ENCODE measurements at regions of chr15 and their contacts with region 1.

Region 1: DNA sequence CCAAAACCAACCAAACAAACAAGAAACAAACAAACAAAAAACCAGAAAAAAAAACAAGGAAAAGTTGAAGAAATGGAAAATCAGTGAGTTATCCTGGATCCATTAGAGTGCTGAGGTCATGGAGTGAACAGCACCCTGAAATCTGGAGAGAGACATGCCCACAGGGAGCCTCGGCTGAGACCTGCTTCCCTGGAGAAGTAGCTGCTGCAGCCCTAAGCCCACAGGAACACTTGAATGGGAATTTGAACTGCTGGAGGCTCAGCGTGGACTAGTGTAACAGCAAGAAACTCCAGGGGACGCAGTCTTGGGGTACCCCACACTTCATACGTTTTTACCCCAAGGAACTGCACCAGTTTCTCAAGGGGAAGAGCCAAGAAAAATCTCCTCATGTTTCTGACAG is 144.1 kb upstream of the UBE3A start:
- DNase-seq: no peak
- ATAC-seq: no peak
- H3K4me3 ChIP-seq: no peak overlapping the region
- H3K27ac ChIP-seq: no peak overlapping the region
- H3K4me1 ChIP-seq: no peaks in the 10 kb centered on the region
- H3K27me3 ChIP-seq: no peaks in the 10 kb centered on the region
- CTCF ChIP-seq: no peak
- POLR2A ChIP-seq: no peak
- RAD21 ChIP-seq: no peak

Region 2: GRCh38 chr15:25333049-25333448 is 249.8 kb before region 1 on chr15:
- CTCF ChIA-PET with region 1: no interaction called
- POLR2A ChIA-PET with region 1: no interaction called
- dilution Hi-C with region 1: no loop called
- in situ Hi-C with region 1: no loop called
- intact Hi-C with region 1: no loop called
- DNase-seq: no peak
- ATAC-seq: no peak
- H3K4me3 ChIP-seq: no peak overlapping the region
- H3K27ac ChIP-seq: no peak overlapping the region
- H3K4me1 ChIP-seq: no peaks in the 10 kb centered on the region
- H3K27me3 ChIP-seq: no peaks in the 10 kb centered on the region
- CTCF ChIP-seq: no peak
- POLR2A ChIP-seq: no peak
- RAD21 ChIP-seq: no peak

Region 3: DNA sequence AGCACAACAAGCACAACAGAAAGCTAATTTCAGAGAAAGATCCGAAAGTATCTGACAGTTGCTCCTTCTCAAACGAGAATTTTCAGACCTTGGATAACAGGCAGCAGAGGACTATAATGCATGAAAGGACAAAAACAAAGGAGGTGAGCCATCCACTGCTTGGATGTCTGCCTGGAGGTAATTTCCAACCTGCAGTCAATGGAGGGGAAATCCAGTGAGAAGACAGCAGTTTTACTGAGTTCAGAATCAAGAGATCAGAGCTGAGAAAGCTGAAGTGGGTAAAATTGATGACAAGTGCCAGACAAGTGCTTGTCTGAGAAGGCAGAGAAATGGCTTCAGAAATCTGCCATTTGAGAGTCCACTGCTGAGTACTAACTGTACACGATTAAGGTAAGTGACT is 166.2 kb before region 1 on chr15:
- CTCF ChIA-PET with region 1: no interaction called
- POLR2A ChIA-PET with region 1: no interaction called
- dilution Hi-C with region 1: no loop called
- in situ Hi-C with region 1: no loop called
- intact Hi-C with region 1: no loop called
- DNase-seq: peak; percentile 24
- ATAC-seq: no peak
- H3K4me3 ChIP-seq: no peak overlapping the region
- H3K27ac ChIP-seq: no peak overlapping the region
- H3K4me1 ChIP-seq: peaks cover 2% of the 10 kb centered on the region; the same call in 1 of the 2 replicates
- H3K27me3 ChIP-seq: no peaks in the 10 kb centered on the region
- CTCF ChIP-seq: no peak
- POLR2A ChIP-seq: no peak
- RAD21 ChIP-seq: no peak

Region 4: DNA sequence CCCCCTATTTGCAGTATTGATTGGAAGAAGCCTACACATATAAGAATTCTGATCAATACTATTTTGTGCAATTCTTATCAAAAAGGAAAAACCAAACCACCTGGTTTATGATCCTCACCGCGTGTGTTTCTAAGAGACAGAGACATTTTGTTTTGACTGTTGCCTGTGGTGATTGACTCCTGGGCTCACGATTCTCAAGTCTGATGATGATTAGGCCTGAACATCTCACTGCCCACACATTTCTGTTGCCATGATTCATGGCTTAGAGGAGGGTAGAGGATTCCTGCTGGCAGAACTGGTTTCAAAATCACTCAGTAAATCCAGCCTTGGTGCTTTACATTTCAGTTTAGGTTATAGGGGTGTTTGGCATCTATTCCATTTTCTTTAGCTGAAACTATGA is 55.8 kb before region 1 on chr15:
- CTCF ChIA-PET with region 1: no interaction called
- POLR2A ChIA-PET with region 1: no interaction called
- dilution Hi-C with region 1: no loop called
- in situ Hi-C with region 1: no loop called
- intact Hi-C with region 1: loop called (anchors 10 kb)
- DNase-seq: no peak
- ATAC-seq: no peak
- H3K4me3 ChIP-seq: no peak overlapping the region
- H3K27ac ChIP-seq: no peak overlapping the region
- H3K4me1 ChIP-seq: no peaks in the 10 kb centered on the region
- H3K27me3 ChIP-seq: no peaks in the 10 kb centered on the region
- CTCF ChIP-seq: no peak
- POLR2A ChIP-seq: no peak
- RAD21 ChIP-seq: no peak